ENCODE measurements at regions of chr7 and their contacts with region 1.

Region 1: GRCh38 chr7:99380032-99380822 is 5.7 kb downstream of the ARPC1B start:
- DNase-seq: peak; percentile 34
- ATAC-seq: peak; percentile 35
- H3K4me3 Mint-ChIP-seq: peak overlapping the region; percentile 83
- H3K27ac Mint-ChIP-seq: peak overlapping the region; percentile 98
- H3K4me1 Mint-ChIP-seq: peaks cover 71% of the 10 kb centered on the region
- H3K27me3 Mint-ChIP-seq: no peaks in the 10 kb centered on the region
- CTCF ChIP-seq: no peak

Region 2: DNA sequence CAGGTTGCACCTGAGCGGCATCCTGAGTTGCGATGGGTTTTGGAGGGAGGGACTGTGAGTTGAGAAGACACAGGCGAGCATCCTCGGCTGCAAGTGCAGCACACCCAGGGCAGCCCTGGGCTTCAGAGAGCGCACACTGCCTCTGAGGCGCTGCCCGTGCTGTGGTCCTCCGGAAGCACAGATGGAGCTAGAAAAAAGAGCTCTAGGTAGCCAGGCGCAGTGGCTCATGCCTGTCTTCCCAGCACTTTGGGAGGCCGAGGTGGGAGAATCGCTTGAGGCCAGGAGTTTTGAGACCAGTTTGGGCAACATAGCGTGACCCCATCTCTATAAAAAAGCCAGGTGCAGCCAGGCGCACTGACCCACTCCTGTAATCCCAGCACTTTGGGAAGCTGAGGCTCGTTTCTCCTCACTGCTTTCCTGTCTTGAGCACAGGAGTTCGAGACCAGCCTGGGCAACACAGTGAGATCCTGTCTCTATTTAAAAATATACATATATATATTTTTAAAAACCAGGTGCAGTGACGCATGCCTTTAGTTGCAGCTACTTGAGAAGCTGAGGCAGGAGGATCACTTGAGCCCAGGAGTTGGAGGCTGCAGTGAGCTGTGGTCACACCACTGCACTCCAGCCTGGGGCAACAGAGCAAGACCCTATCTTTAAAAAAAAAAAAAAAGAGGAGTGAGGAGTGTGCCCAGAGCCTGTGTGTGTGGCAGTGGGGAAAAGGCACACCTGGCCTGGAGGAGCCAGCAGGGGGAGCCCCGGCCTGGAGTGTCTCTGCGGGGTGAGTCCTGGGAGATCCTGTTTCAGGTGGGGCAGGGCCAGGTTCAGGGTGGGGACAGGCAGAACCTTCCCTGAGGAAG is 15.0 kb before region 1 on chr7:
- CTCF ChIA-PET with region 1: interaction called, 5 read pairs
- POLR2A ChIA-PET with region 1: interaction called, 14 read pairs
- intact Hi-C with region 1: no loop called
- DNase-seq: peak; percentile 55
- ATAC-seq: peak; percentile 99
- H3K4me3 Mint-ChIP-seq: no peak overlapping the region
- H3K27ac Mint-ChIP-seq: no peak overlapping the region
- H3K4me1 Mint-ChIP-seq: no peaks in the 10 kb centered on the region
- H3K27me3 Mint-ChIP-seq: no peaks in the 10 kb centered on the region
- CTCF ChIP-seq: no peak

Region 3: GRCh38 chr7:99392677-99393354 is 12.6 kb after region 1 on chr7:
- CTCF ChIA-PET with region 1: no interaction called
- POLR2A ChIA-PET with region 1: interaction called, 62 read pairs
- intact Hi-C with region 1: loop called (anchors 1 kb)
- DNase-seq: peak; percentile 79
- ATAC-seq: peak; percentile 92
- H3K4me3 Mint-ChIP-seq: peak overlapping the region; percentile 84
- H3K27ac Mint-ChIP-seq: peak overlapping the region; percentile 78
- H3K4me1 Mint-ChIP-seq: peaks cover 28% of the 10 kb centered on the region
- H3K27me3 Mint-ChIP-seq: no peaks in the 10 kb centered on the region
- CTCF ChIP-seq: no peak

Region 4: GRCh38 chr7:99707096-99707495 is 326.9 kb after region 1 on chr7:
- CTCF ChIA-PET with region 1: no interaction called
- POLR2A ChIA-PET with region 1: no interaction called
- intact Hi-C with region 1: no loop called
- DNase-seq: no peak
- ATAC-seq: no peak
- H3K4me3 Mint-ChIP-seq: no peak overlapping the region
- H3K27ac Mint-ChIP-seq: no peak overlapping the region
- H3K4me1 Mint-ChIP-seq: no peaks in the 10 kb centered on the region
- H3K27me3 Mint-ChIP-seq: peaks cover 3% of the 10 kb centered on the region
- CTCF ChIP-seq: no peak

Measured in activated B cell treated with CpG ODN at 0.5 μM for 24 hours (primary cell).